ENCODE measurements at regions of chr2 and their contacts with region 1.

Region 1: DNA sequence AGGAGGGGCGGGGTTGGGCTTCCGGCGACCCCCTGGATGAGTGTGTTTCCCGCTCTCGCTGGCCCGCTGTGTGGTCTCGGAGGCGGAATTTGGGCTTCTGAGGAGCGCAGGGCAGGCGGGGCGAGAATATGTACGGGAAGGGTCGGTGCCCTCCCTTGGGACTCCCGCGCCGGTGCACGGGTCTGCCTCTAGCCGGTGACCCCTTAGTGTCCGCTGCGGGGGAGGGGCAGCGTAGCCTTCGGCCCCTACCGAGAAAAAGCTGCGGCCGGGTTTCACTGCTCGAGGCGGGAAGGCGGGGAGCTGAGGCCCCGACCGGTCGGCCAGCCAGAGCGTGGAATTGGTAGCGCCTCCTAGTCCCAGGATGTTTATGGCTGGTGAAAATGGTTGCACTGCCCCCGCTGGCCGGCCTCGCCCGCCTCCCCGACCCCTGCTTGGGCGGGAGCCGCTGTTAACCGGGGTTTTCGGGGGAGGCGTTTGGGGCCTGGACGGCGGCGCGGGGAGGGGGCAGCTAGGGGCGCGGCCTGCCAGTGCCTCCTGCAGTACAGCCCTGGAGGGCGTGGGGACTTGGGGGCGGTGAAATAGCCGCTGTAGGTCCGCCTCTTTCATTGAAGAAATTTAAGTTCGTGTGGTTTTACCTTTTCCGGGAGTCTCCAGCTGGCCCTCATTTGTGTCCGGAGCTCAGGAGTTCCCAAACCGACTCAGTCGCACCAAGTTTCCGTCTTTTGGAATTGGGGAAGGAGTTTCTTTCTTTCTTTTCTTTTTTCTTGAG is at the start of gene UGP2:
- DNase-seq: peak; percentile 86 to 88
- H3K4me3 ChIP-seq: peak within 1 kb of the TSS; percentile 94 to 100 (median 97)
- H3K27ac ChIP-seq: peak within 1 kb of the TSS; percentile 93
- H3K4me1 ChIP-seq: peaks cover 0 to 3% (median 1%) of the 10 kb centered on the region in 4 experiments; a peak in 3 of 7 replicates
- H3K27me3 ChIP-seq: no peaks in the 10 kb centered on the region
- CTCF ChIP-seq: peak in 2 of 3 experiments; percentile 14 to 33; a peak in 2 of 4 replicates
- EP300 ChIP-seq: no peak
- POLR2A ChIP-seq: peak; percentile 89 to 96
- RAD21 ChIP-seq: peak in 1 of 2 experiments; percentile 11; a peak in 2 of 4 replicates
- total RNA-seq, gene UGP2: 925 and 956 TPM in 2 replicates

Region 2: GRCh38 chr2:63588385-63589147 is 252.9 kb before region 1 on chr2 and contains the starts of genes MDH1 and WDPCP:
- CTCF ChIA-PET with region 1: no interaction called
- POLR2A ChIA-PET with region 1: interaction called, 36 read pairs
- DNase-seq: peak; percentile 91 to 94
- H3K4me3 ChIP-seq: peak within 1 kb of the TSS; percentile 87 to 98 (median 94)
- H3K27ac ChIP-seq: peak within 1 kb of the TSS; percentile 80
- H3K4me1 ChIP-seq: peaks cover 2 to 6% (median 4%) of the 10 kb centered on the region in 4 experiments; a peak in 5 of 7 replicates
- H3K27me3 ChIP-seq: no peaks in the 10 kb centered on the region
- CTCF ChIP-seq: no peak
- EP300 ChIP-seq: 0 out of 3 replicates have a peak, but pooled peaks of 1 of the 2 experiments have one; percentile 41
- POLR2A ChIP-seq: peak; percentile 75 to 82
- RAD21 ChIP-seq: no peak; a peak in 1 of 4 replicates
- total RNA-seq, gene MDH1: 335 and 353 TPM in 2 replicates
- total RNA-seq, gene WDPCP: 23.0 and 25.8 TPM in 2 replicates

Region 3: GRCh38 chr2:63692002-63692606 is 149.3 kb before region 1 on chr2:
- CTCF ChIA-PET with region 1: interaction called, 19 read pairs
- POLR2A ChIA-PET with region 1: interaction called, 12 read pairs
- DNase-seq: no peak
- H3K4me3 ChIP-seq: no peak overlapping the region
- H3K27ac ChIP-seq: no peak overlapping the region
- H3K4me1 ChIP-seq: peaks cover 0 to 3% (median 0%) of the 10 kb centered on the region in 4 experiments; a peak in 2 of 7 replicates
- H3K27me3 ChIP-seq: no peaks in the 10 kb centered on the region
- CTCF ChIP-seq: peak in 2 of 3 experiments; percentile 18 to 31; a peak in 2 of 4 replicates
- EP300 ChIP-seq: no peak
- POLR2A ChIP-seq: no peak
- RAD21 ChIP-seq: peak; percentile 46 to 61

Region 4: GRCh38 chr2:63763391-63763941 is 78.0 kb before region 1 on chr2:
- CTCF ChIA-PET with region 1: no interaction called
- POLR2A ChIA-PET with region 1: interaction called, 17 read pairs
- DNase-seq: no peak
- H3K4me3 ChIP-seq: no peak overlapping the region
- H3K27ac ChIP-seq: no peak overlapping the region
- H3K4me1 ChIP-seq: peaks cover 8 to 19% (median 15%) of the 10 kb centered on the region in 4 experiments; a peak in 6 of 7 replicates
- H3K27me3 ChIP-seq: peaks cover 0 to 1% (median 0%) of the 10 kb centered on the region in 4 experiments; a peak in 1 of 7 replicates
- CTCF ChIP-seq: no peak
- EP300 ChIP-seq: no peak
- POLR2A ChIP-seq: no peak
- RAD21 ChIP-seq: no peak

Region 5: GRCh38 chr2:63827749-63828148 is 13.7 kb before region 1 on chr2:
- CTCF ChIA-PET with region 1: interaction called, 3 read pairs
- POLR2A ChIA-PET with region 1: interaction called, 45 read pairs
- DNase-seq: no peak
- H3K4me3 ChIP-seq: no peak overlapping the region
- H3K27ac ChIP-seq: no peak overlapping the region
- H3K4me1 ChIP-seq: peaks cover 0 to 8% (median 0%) of the 10 kb centered on the region in 4 experiments; a peak in 2 of 7 replicates
- H3K27me3 ChIP-seq: no peaks in the 10 kb centered on the region
- CTCF ChIP-seq: no peak
- EP300 ChIP-seq: no peak
- POLR2A ChIP-seq: no peak
- RAD21 ChIP-seq: no peak

Region 6: GRCh38 chr2:63875131-63875527 is 33.7 kb after region 1 on chr2:
- CTCF ChIA-PET with region 1: no interaction called
- POLR2A ChIA-PET with region 1: interaction called, 47 read pairs
- DNase-seq: no peak
- H3K4me3 ChIP-seq: no peak overlapping the region
- H3K27ac ChIP-seq: no peak overlapping the region
- H3K4me1 ChIP-seq: peaks cover 0 to 19% (median 7%) of the 10 kb centered on the region in 4 experiments; a peak in 4 of 7 replicates
- H3K27me3 ChIP-seq: no peaks in the 10 kb centered on the region
- CTCF ChIP-seq: no peak
- EP300 ChIP-seq: no peak
- POLR2A ChIP-seq: peak; percentile 11 to 76; a peak in 1 of 3 replicates
- RAD21 ChIP-seq: no peak

Region 7: GRCh38 chr2:63942788-63943187 is 101.3 kb after region 1 on chr2:
- CTCF ChIA-PET with region 1: no interaction called
- POLR2A ChIA-PET with region 1: no interaction called
- DNase-seq: no peak
- H3K4me3 ChIP-seq: no peak overlapping the region
- H3K27ac ChIP-seq: no peak overlapping the region
- H3K4me1 ChIP-seq: no peaks in the 10 kb centered on the region
- H3K27me3 ChIP-seq: no peaks in the 10 kb centered on the region; a peak in 1 of 7 replicates
- CTCF ChIP-seq: no peak
- EP300 ChIP-seq: no peak
- POLR2A ChIP-seq: no peak
- RAD21 ChIP-seq: no peak

Measured in H1 (cell line).